Psoas muscle (tissue), 8 donors: ENCODE measurements at regions of chr18 and their contacts with region 1.

Region 1: GRCh38 chr18:9079818-9080528 is 22.5 kb upstream of the NDUFV2 start:
- DNase-seq: no peak
- ATAC-seq: no peak
- H3K4me3 ChIP-seq: no peak overlapping the region
- H3K27ac ChIP-seq: no peak overlapping the region
- H3K4me1 ChIP-seq: no peaks in the 10 kb centered on the region
- H3K27me3 ChIP-seq: no peaks in the 10 kb centered on the region
- CTCF ChIP-seq: no peak

Region 2: DNA sequence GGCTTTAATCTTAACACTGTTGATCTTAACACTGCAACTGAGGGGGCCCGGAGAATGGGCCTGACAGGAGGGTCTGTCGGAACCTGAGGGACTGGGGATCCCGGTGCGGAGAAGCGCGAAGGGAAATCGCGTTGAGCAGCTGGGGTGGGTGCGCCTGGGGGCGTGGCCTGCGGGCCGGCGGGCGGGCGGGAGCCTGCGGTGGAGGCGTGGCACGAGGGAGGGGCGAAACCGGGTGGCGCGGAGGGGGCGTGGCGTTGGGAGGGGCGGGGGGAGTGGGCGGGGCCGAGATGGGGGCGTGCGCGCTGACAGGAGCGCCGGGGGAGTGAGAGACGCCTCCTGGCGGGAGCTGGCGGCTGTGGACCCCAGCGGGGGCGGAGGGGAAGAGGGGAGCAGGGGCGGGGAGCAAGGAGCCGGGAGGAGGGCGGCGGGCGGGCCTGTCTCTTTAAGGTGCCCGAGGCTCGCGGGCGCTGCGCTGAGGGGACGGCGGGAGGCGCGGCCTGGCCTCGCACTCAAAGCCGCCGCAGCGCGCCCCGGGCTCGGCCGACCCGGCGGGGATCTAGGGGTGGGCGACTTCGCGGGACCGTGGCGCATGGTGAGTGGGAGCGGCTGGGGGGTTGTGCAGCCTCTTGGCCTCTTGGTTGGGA is 254.5 kb after region 1 on chr18 and contains the start of gene TWSG1:
- intact Hi-C with region 1: loop called in 1 of 2 experiments (anchors 10 kb)
- DNase-seq: peak; percentile 94 to 97
- ATAC-seq: peak; percentile 93 to 96 (median 96)
- H3K4me3 ChIP-seq: peak within 1 kb of the TSS; percentile 91
- H3K27ac ChIP-seq: peak within 1 kb of the TSS; percentile 80
- H3K4me1 ChIP-seq: peaks cover 11% of the 10 kb centered on the region
- H3K27me3 ChIP-seq: no peaks in the 10 kb centered on the region
- CTCF ChIP-seq: peak; percentile 36
- total RNA-seq, gene TWSG1: 6.2 to 8.5 (median 7.7) TPM